HEK293 (cell line): ENCODE measurements at regions of chr2 and their contacts with region 1.

Region 1: DNA sequence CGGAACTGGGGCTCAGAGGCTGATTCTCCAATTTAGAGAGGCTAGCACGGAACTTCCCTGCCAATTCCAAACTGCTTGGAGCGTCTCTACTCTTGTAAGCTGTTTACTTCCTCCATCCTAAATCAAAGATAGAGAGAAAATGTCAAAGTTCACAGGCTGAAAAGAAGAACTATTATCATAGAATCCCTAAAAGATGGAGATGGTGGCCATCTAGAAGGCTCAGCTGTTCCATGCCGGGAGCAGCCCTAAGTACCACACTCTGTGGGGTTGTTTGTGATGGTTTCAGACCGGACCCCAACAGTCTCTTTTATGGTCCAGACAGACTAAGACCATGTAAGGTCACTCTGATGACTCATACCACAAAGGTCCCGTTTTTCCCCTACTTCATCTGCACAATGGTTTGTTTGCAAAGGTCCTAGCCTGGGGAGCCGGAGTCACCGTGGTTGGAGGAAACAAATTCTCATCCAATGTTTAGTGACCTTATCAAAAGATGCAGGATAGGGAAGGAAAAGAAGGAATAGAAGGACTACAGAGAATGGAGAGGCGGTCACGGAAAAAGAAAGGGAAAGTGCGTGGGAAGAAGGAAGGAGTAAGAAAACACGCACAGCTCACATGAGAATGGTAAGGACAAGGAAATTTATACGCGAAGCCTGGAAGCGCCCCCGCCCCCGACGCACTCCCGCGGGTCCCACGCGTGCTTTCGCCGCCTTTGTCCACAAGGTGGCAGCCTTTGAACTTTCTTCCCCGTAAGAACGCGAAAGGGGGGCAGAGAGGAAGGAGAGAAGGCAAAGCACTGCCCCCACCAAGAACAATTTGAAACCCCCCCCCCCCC is 453 bp upstream of the ANTXR1 start:
- H3K4me3 ChIP-seq: peak overlapping the region; percentile 92
- H3K27ac ChIP-seq: peak overlapping the region; percentile 70; the same call in 1 of the 2 replicates
- H3K4me1 ChIP-seq: no peaks in the 10 kb centered on the region
- CTCF ChIP-seq: peak; percentile 78

Region 2: GRCh38 chr2:68943581-68944568 is 68.7 kb before region 1 on chr2:
- CTCF ChIA-PET with region 1: interaction called, 15 read pairs
- POLR2A ChIA-PET with region 1: interaction called, 3 read pairs
- H3K4me3 ChIP-seq: no peak overlapping the region
- H3K27ac ChIP-seq: no peak overlapping the region
- H3K4me1 ChIP-seq: no peaks in the 10 kb centered on the region
- CTCF ChIP-seq: peak; percentile 62

Region 3: GRCh38 chr2:69026026-69026425 is 13.5 kb after region 1 on chr2:
- CTCF ChIA-PET with region 1: interaction called, 10 read pairs
- POLR2A ChIA-PET with region 1: no interaction called
- H3K4me3 ChIP-seq: no peak overlapping the region
- H3K27ac ChIP-seq: no peak overlapping the region
- H3K4me1 ChIP-seq: no peaks in the 10 kb centered on the region
- CTCF ChIP-seq: no peak